ENCODE measurements at regions of chr1 and their contacts with region 1.

Region 1: GRCh38 chr1:2044510-2045319 is 5.5 kb upstream of the PRKCZ start:
- DNase-seq: peak in 1 of 2 donors; percentile 93
- H3K4me3 ChIP-seq: no peak overlapping the region
- CTCF ChIP-seq: no peak
- POLR2A ChIP-seq: no peak

Region 2: GRCh38 chr1:1959840-1960479 is 84.8 kb before region 1 on chr1:
- intact Hi-C with region 1: loop called (anchors 5 kb)
- DNase-seq: peak; percentile 58 to 95
- H3K4me3 ChIP-seq: no peak overlapping the region
- CTCF ChIP-seq: peak in 1 of 3 donors; percentile 69
- POLR2A ChIP-seq: no peak

Region 3: GRCh38 chr1:1985375-1986050 is 59.2 kb before region 1 on chr1:
- intact Hi-C with region 1: no loop called
- DNase-seq: no peak
- H3K4me3 ChIP-seq: no peak overlapping the region
- CTCF ChIP-seq: no peak
- POLR2A ChIP-seq: no peak